ENCODE measurements at regions of chr7 and their contacts with region 1.

Region 1: GRCh38 chr7:107743567-107744344 is at the start of gene CBLL1:
- DNase-seq: peak; percentile 95 to 96
- ATAC-seq: peak; percentile 92 to 95
- H3K4me3 ChIP-seq: peak within 1 kb of the TSS; percentile 75 to 96 (median 91)
- H3K27ac ChIP-seq: peak within 1 kb of the TSS; percentile 92 to 100 (median 95)
- H3K4me1 ChIP-seq: peaks cover 38 to 45% of the 10 kb centered on the region in 2 donors
- H3K27me3 ChIP-seq: no peaks in the 10 kb centered on the region
- CTCF ChIP-seq: peak; percentile 69 to 85 (median 83)
- POLR2A ChIP-seq: peak; percentile 65 to 83
- total RNA-seq, gene CBLL1: 21.6 to 49.6 (median 34.8) TPM

Region 2: DNA sequence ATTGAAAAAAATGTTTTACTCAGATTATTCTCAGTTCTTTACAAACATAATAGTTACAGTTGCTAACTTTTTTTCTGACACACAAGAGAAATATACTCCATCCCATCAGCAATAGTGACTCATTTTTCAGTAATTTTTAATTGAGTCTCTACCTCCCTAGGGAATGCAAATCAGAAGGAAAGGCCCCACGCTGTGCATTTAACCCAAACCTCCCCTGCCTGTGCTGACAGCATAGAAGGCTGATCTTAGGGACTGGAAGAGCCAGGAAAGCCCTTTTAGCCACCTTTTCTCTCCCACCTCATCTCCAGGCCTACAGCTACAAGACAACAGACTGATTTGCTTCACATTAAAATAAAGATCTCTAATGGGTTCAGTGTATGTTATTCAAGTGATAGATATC is 903.4 kb before region 1 on chr7:
- in situ Hi-C with region 1: no loop called
- intact Hi-C with region 1: no loop called
- DNase-seq: no peak
- ATAC-seq: no peak
- H3K4me3 ChIP-seq: no peak overlapping the region
- H3K27ac ChIP-seq: no peak overlapping the region
- H3K4me1 ChIP-seq: no peaks in the 10 kb centered on the region
- H3K27me3 ChIP-seq: no peaks in the 10 kb centered on the region
- CTCF ChIP-seq: no peak
- POLR2A ChIP-seq: no peak

Region 3: GRCh38 chr7:107168233-107169119 is 575.3 kb before region 1 on chr7 and contains the start of gene HBP1:
- in situ Hi-C with region 1: no loop called
- intact Hi-C with region 1: loop called (anchors 1 kb)
- DNase-seq: peak; percentile 100
- ATAC-seq: peak; percentile 84
- H3K4me3 ChIP-seq: peak within 1 kb of the TSS; percentile 85 to 94 (median 89)
- H3K27ac ChIP-seq: peak within 1 kb of the TSS; percentile 97 to 100 (median 98)
- H3K4me1 ChIP-seq: peaks cover 32 to 38% of the 10 kb centered on the region in 2 donors
- H3K27me3 ChIP-seq: no peaks in the 10 kb centered on the region
- CTCF ChIP-seq: no peak
- POLR2A ChIP-seq: peak; percentile 40 to 95
- total RNA-seq, gene HBP1: 70.6 to 172 (median 143) TPM

Region 4: DNA sequence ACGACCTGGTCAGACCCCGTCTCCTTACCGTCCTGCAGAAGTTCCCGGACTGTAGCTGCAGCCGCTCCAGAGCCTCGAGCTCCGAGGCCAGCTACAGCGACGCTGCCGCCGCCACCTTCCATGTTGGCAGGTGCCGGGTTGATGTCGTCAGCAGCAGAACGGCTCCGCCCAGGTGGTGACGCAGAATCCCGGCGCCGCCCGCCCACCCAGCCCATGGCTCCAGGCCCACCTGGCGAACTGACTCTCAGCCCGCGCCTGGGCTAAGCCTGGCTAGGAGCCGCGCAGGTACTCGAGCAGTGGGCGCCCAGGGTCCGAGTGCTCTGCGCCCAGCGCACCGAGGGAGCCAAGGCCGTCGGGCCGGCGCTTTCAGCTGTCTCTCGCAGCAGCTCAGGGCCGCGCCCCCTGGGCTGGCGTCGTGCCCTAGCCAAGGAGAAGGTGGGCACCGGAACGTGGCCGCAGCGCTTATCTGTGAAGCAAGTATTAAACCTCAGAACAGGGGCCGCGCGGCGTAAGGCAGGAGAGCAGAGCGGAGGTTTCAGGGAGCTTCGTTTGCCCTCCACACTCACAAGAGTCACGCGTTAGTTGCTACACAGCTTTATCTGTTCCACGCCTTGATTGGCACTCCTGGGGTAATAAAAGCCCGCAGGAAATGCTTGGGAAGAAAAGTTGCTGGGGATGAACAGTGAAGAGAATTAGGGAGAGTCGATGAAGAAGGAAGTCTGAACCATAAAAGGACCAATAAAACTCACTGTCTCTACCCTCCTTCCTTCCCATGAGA is 179.8 kb before region 1 on chr7 and contains the starts of genes COG5 and DUS4L:
- in situ Hi-C with region 1: no loop called
- intact Hi-C with region 1: loop called (anchors 5 kb)
- DNase-seq: peak; percentile 69 to 78
- ATAC-seq: peak; percentile 96 to 97
- H3K4me3 ChIP-seq: peak within 1 kb of the TSS; percentile 78 to 99 (median 95)
- H3K27ac ChIP-seq: peak within 1 kb of the TSS; percentile 92 to 99 (median 98)
- H3K4me1 ChIP-seq: peaks cover 37 to 41% of the 10 kb centered on the region in 2 donors
- H3K27me3 ChIP-seq: no peaks in the 10 kb centered on the region
- CTCF ChIP-seq: no peak
- POLR2A ChIP-seq: peak; percentile 54 to 56
- total RNA-seq, gene COG5: 20.8 to 49.7 (median 25.7) TPM
- total RNA-seq, gene DUS4L: 3.1 to 5.8 (median 3.6) TPM

Region 5: GRCh38 chr7:107879400-107880035 is 135.8 kb after region 1 on chr7:
- in situ Hi-C with region 1: loop called (anchors 5 to 10 kb)
- intact Hi-C with region 1: loop called (anchors 1 kb)
- DNase-seq: no peak
- ATAC-seq: peak; percentile 78 to 84
- H3K4me3 ChIP-seq: no peak overlapping the region
- H3K27ac ChIP-seq: peak overlapping the region in 1 of 4 donors; percentile 44
- H3K4me1 ChIP-seq: no peaks in the 10 kb centered on the region
- H3K27me3 ChIP-seq: no peaks in the 10 kb centered on the region
- CTCF ChIP-seq: peak; percentile 29 to 74 (median 67)
- POLR2A ChIP-seq: no peak

Region 6: GRCh38 chr7:108525985-108526767 is 782.4 kb after region 1 on chr7 and contains the start of gene PNPLA8:
- in situ Hi-C with region 1: no loop called
- intact Hi-C with region 1: loop called (anchors 5 kb)
- DNase-seq: peak; percentile 99 to 100
- ATAC-seq: peak; percentile 84 to 87
- H3K4me3 ChIP-seq: peak within 1 kb of the TSS; percentile 75 to 94 (median 86)
- H3K27ac ChIP-seq: peak within 1 kb of the TSS; percentile 96 to 99 (median 98)
- H3K4me1 ChIP-seq: peaks cover 29 to 36% of the 10 kb centered on the region in 2 donors
- H3K27me3 ChIP-seq: no peaks in the 10 kb centered on the region
- CTCF ChIP-seq: peak in 1 of 5 experiments; percentile 18
- POLR2A ChIP-seq: peak; percentile 95
- total RNA-seq, gene PNPLA8: 49.7 to 86.3 (median 61.9) TPM